BJ (cell line): ENCODE measurements at regions of chr11 and their contacts with region 1.

Region 1: GRCh38 chr11:85826116-85826855 is 15.3 kb upstream of the SYTL2 start:
- DNase-seq: no peak
- H3K4me3 ChIP-seq: no peak overlapping the region
- H3K27me3 ChIP-seq: no peaks in the 10 kb centered on the region
- CTCF ChIP-seq: peak; percentile 81

Region 2: DNA sequence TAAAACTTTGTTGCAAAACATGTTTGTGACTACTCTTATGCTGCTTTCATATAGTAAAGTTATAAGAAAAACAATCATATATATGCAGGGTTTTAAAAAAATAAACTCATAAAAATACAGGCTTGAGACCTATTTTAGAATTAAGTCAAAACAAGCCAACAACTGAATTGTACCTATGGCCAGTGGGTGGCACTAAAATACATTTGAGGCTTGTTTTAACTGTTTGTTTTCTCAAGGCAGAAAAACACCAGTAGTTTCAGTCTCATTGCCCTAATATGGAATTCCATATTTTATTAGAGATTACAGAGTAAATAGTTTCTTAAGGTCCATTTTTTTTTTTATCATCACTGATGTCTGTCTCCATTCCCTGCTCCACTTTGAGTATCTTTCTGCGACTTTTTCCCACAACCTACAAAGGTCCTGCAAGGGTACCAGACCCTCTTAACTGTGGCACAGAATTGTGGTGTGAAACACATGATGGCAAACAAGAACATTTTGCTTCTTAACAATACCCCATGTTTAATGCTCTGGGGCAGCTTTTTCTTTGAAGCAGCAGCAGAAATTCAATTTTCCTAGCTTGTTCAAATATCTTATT is 131.8 kb before region 1 on chr11:
- CTCF ChIA-PET with region 1: interaction called, 10 read pairs
- POLR2A ChIA-PET with region 1: interaction called, 3 read pairs
- DNase-seq: no peak
- H3K4me3 ChIP-seq: no peak overlapping the region
- H3K27me3 ChIP-seq: no peaks in the 10 kb centered on the region
- CTCF ChIP-seq: peak; percentile 61

Region 3: DNA sequence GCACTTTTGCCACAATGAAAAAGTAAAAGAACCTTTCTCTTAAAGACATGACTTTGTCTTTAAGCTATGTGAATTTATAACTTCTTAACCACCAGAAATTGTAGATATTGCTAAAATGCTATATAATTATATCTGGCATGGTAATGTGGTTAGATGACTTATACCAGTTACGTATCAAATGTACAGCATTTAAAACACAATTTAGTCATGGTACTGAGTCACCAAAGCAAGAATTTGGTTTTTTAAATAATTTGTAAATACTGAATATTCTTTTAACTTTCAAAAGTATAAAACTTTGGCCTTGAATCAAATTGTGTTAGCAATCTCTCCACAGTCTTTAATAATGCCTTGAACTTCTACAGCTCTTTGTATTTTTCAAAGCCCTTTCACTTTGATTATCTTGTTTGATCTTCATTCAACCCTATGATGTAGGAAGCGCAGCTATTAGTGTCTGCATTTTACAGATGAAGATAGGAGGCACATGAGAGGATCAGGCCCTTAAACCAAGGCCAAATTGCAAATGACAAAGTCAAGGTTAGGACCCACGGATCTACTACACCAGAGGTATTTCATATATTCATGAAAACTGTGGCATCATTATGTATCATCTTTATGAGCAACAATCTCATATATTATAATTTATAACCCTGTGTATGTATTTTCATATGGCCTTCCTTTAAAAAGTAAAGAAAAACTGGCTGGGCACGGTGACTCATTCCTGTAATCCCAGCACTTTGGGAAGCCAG is 10.9 kb before region 1 on chr11:
- CTCF ChIA-PET with region 1: interaction called, 26 read pairs
- POLR2A ChIA-PET with region 1: interaction called, 3 read pairs
- DNase-seq: peak; percentile 62
- H3K4me3 ChIP-seq: no peak overlapping the region
- H3K27me3 ChIP-seq: no peaks in the 10 kb centered on the region
- CTCF ChIP-seq: no peak